Heart right ventricle (tissue), 16 donors: ENCODE measurements at regions of chrX and their contacts with region 1.

Region 1: DNA sequence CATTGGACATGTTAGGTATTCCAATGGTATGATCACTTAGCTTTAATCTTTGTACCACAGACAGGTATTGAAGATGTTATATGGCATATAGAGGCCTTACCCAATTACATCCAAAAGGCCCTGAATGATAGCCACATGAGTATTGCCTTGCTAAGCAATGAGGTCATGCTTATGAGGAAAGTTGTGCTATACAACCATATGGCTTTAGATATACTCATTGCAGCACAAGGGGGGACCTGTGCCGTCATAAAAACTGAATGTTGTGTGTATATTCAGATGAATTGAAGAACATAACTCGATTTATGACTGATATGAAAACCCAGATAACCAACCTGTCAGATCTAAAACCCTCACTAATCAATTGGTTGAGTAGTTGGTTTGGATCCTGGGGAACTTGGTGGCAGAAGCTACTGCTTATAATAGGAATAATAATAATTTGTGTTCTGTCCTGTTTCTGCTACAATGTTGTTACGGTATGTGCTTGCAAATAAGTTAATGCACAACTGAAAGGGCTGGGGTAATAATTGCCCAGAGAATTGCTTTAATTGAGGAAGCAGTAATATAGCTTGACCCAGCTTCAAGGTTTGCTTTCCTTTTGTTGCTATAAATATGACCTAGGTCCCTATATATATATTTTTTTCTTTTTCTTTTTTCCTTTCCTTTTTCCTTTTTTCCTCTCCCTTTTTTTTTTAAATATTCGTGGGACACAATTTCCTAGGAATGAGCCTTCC is 21.5 kb upstream of the CSTF2 start:
- DNase-seq: no peak
- ATAC-seq: no peak
- H3K4me3 ChIP-seq: no peak overlapping the region
- H3K27ac ChIP-seq: no peak overlapping the region
- H3K4me1 ChIP-seq: no peaks in the 10 kb centered on the region
- H3K27me3 ChIP-seq: peaks cover 0 to 5% (median 0%) of the 10 kb centered on the region in 7 donors
- CTCF ChIP-seq: no peak

Region 2: GRCh38 chrX:99507768-99508167 is 1290.9 kb before region 1 on chrX:
- intact Hi-C with region 1: loop called in 1 of 10 experiments (anchors 10 kb)
- DNase-seq: no peak
- ATAC-seq: no peak
- H3K4me3 ChIP-seq: no peak overlapping the region
- H3K27ac ChIP-seq: no peak overlapping the region
- H3K4me1 ChIP-seq: no peaks in the 10 kb centered on the region
- H3K27me3 ChIP-seq: peaks cover 0 to 4% (median 0%) of the 10 kb centered on the region in 7 donors
- CTCF ChIP-seq: no peak